ENCODE measurements at regions of chr14 and their contacts with region 1.

Region 1: GRCh38 chr14:49892636-49893308 is at the start of gene ARF6:
- DNase-seq: peak; percentile 98
- H3K4me3 Mint-ChIP-seq: peak within 1 kb of the TSS; percentile 99
- H3K27ac Mint-ChIP-seq: peak within 1 kb of the TSS; percentile 99
- H3K4me1 Mint-ChIP-seq: peaks cover 26% of the 10 kb centered on the region
- H3K27me3 Mint-ChIP-seq: no peaks in the 10 kb centered on the region
- total RNA-seq, gene ARF6: 162 and 165 TPM in 2 replicates

Region 2: GRCh38 chr14:49294621-49295148 is 598.1 kb before region 1 on chr14:
- intact Hi-C with region 1: no loop called
- DNase-seq: no peak
- H3K4me3 Mint-ChIP-seq: no peak overlapping the region
- H3K27ac Mint-ChIP-seq: no peak overlapping the region
- H3K4me1 Mint-ChIP-seq: no peaks in the 10 kb centered on the region
- H3K27me3 Mint-ChIP-seq: no peaks in the 10 kb centered on the region

Region 3: GRCh38 chr14:49862089-49862673 is 30.6 kb before region 1 on chr14:
- intact Hi-C with region 1: loop called (anchors 1 kb)
- DNase-seq: peak; percentile 83
- H3K4me3 Mint-ChIP-seq: no peak overlapping the region
- H3K27ac Mint-ChIP-seq: no peak overlapping the region
- H3K4me1 Mint-ChIP-seq: peaks cover 16% of the 10 kb centered on the region
- H3K27me3 Mint-ChIP-seq: no peaks in the 10 kb centered on the region

Region 4: GRCh38 chr14:49971156-49972130 is 78.7 kb after region 1 on chr14:
- intact Hi-C with region 1: loop called (anchors 1 kb)
- DNase-seq: peak; percentile 42
- H3K4me3 Mint-ChIP-seq: peak overlapping the region; percentile 77
- H3K27ac Mint-ChIP-seq: peak overlapping the region; percentile 99
- H3K4me1 Mint-ChIP-seq: peaks cover 46% of the 10 kb centered on the region
- H3K27me3 Mint-ChIP-seq: no peaks in the 10 kb centered on the region

Region 5: GRCh38 chr14:50060871-50061663 is 168.3 kb after region 1 on chr14:
- intact Hi-C with region 1: loop called (anchors 1 kb)
- DNase-seq: no peak
- H3K4me3 Mint-ChIP-seq: peak overlapping the region; percentile 97
- H3K27ac Mint-ChIP-seq: peak overlapping the region; percentile 100
- H3K4me1 Mint-ChIP-seq: peaks cover 83% of the 10 kb centered on the region
- H3K27me3 Mint-ChIP-seq: no peaks in the 10 kb centered on the region

Region 6: DNA sequence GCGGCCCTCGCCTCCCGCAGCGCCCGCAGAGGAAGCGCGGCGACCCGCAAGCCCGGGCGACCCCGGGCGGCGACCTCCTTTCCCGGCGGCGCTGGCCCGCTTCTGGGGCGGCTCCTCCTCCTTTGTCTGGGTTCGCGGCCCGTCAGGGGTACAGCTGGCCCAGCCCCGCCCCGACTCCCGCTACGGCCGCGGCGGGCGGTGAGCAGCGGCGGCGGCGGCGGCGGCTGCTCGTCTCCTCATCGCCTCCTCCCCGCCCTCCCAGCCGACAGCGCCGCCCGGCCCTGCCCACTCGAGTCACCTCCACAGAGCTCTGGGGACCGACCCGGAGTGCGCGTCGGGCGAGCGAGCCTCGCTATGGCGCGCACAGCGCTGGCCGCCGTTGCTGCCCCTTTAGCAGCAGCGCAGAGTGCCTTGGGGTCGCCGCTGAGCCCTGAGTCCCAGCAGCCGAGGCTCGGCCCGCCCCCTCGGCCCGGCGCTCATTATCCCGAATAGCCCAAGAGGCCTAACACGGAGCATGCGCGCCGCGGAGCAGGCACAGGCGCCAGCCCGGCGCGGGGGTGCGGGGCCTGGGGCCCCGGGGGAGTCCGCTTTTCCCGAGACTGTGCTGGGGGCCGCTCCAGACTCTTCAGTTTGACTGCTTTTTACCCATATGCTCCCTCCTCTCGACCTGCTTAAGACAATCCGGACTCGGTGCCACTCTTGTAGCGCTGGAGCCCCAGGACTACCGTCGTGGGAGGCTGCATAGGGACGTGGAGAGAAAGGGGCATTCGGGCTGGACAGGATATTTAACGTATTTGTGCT is 338.9 kb after region 1 on chr14 and contains the start of gene SOS2:
- intact Hi-C with region 1: loop called (anchors 1 kb)
- DNase-seq: peak; percentile 80
- H3K4me3 Mint-ChIP-seq: peak within 1 kb of the TSS; percentile 92
- H3K27ac Mint-ChIP-seq: peak within 1 kb of the TSS; percentile 88
- H3K4me1 Mint-ChIP-seq: peaks cover 36% of the 10 kb centered on the region
- H3K27me3 Mint-ChIP-seq: peaks cover 4% of the 10 kb centered on the region
- total RNA-seq, gene SOS2: 17.0 and 20.7 TPM in 2 replicates

Region 7: GRCh38 chr14:50520947-50521815 is 628.4 kb after region 1 on chr14:
- intact Hi-C with region 1: loop called (anchors 2 kb)
- DNase-seq: no peak
- H3K4me3 Mint-ChIP-seq: no peak overlapping the region
- H3K27ac Mint-ChIP-seq: peak overlapping the region; percentile 91
- H3K4me1 Mint-ChIP-seq: peaks cover 43% of the 10 kb centered on the region
- H3K27me3 Mint-ChIP-seq: no peaks in the 10 kb centered on the region